T-cell (primary cell): ENCODE measurements at regions of chr2 and their contacts with region 1.

Region 1: DNA sequence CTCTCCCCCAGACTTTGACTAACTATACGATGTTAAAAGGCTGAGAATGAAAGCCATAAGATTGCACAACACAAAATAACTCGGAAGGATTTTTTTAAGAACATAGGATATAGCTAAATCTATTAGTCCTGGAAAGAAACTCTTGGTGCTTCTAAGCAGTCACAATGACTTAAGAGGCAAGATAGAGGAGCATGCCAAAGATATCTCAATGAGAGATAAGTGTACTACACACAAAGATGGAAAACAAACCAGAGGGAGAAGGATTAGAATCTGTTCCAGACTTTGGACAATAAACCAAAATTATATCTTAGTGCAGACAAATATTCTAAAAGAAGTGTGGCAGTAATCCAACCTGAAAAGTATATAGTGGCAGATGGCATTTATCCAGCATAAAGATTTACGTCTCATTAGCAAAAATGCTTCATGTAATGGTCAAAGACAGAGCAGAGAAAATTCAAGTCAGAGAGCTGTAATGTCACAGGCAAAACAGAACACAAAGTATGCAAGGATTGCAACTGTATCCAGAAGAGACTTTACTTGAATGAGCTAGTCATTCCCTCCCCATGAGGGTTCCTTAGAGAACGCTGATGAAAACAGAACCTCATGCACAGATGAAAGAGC is 28.8 kb upstream of the EVA1A start:
- DNase-seq: no peak
- ATAC-seq: no peak
- H3K4me3 ChIP-seq: no peak overlapping the region
- H3K4me3 Mint-ChIP-seq: no peak overlapping the region
- H3K27ac ChIP-seq: no peak overlapping the region
- H3K27ac Mint-ChIP-seq: no peak overlapping the region
- H3K4me1 ChIP-seq: no peaks in the 10 kb centered on the region
- H3K4me1 Mint-ChIP-seq: no peaks in the 10 kb centered on the region
- H3K27me3 ChIP-seq: no peaks in the 10 kb centered on the region
- H3K27me3 Mint-ChIP-seq: peaks cover 0 to 9% of the 10 kb centered on the region in 2 donors

Region 2: GRCh38 chr2:75571730-75572419 is 17.6 kb before region 1 on chr2:
- CTCF ChIA-PET with region 1: no interaction called
- POLR2A ChIA-PET with region 1: interaction called in 1 of 2 experiments, 10 read pairs
- DNase-seq: no peak
- ATAC-seq: no peak
- H3K4me3 ChIP-seq: no peak overlapping the region
- H3K4me3 Mint-ChIP-seq: no peak overlapping the region
- H3K27ac ChIP-seq: no peak overlapping the region
- H3K27ac Mint-ChIP-seq: no peak overlapping the region
- H3K4me1 ChIP-seq: no peaks in the 10 kb centered on the region
- H3K4me1 Mint-ChIP-seq: no peaks in the 10 kb centered on the region
- H3K27me3 ChIP-seq: no peaks in the 10 kb centered on the region
- H3K27me3 Mint-ChIP-seq: peaks cover 33 to 34% of the 10 kb centered on the region in 2 donors